PC-9 (cell line): ENCODE measurements at regions of chr11 and their contacts with region 1.

Region 1: GRCh38 chr11:27718346-27718852 is 18.1 kb upstream of the BDNF start:
- DNase-seq: peak in 1 of 2 experiments; percentile 55
- H3K4me3 ChIP-seq: peak overlapping the region; percentile 58
- H3K27ac ChIP-seq: peak overlapping the region; percentile 68
- H3K4me1 ChIP-seq: 0 out of 2 replicates have a peak, but pooled peaks cover 7% of the 10 kb centered on the region
- H3K27me3 ChIP-seq: no peaks in the 10 kb centered on the region
- CTCF ChIP-seq: no peak

Region 2: DNA sequence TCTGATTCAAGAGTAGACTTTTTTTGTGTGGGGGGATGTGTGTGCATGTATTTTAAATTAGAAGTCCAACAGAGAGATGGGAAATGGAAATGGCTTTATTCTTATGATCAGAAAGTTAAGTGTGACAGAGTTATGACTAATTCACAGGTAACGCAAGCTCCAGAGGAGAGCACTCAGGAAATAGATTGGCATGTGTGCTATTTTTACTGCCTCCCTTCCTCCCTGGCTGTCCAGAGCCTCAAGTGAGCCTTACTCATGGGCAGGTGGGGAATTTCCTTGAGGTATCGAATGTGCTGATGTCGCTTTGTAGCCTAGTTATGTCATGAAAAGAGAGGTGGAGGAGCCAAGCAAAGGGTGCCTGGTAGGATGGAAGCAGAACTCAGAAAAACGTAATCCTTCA is 52.2 kb after region 1 on chr11:
- CTCF ChIA-PET with region 1: no interaction called
- POLR2A ChIA-PET with region 1: no interaction called
- intact Hi-C with region 1: loop called (anchors 5 kb)
- DNase-seq: peak; percentile 30 to 79
- H3K4me3 ChIP-seq: no peak overlapping the region
- H3K27ac ChIP-seq: no peak overlapping the region
- H3K4me1 ChIP-seq: peaks cover 12% of the 10 kb centered on the region
- H3K27me3 ChIP-seq: no peaks in the 10 kb centered on the region
- CTCF ChIP-seq: no peak

Region 3: DNA sequence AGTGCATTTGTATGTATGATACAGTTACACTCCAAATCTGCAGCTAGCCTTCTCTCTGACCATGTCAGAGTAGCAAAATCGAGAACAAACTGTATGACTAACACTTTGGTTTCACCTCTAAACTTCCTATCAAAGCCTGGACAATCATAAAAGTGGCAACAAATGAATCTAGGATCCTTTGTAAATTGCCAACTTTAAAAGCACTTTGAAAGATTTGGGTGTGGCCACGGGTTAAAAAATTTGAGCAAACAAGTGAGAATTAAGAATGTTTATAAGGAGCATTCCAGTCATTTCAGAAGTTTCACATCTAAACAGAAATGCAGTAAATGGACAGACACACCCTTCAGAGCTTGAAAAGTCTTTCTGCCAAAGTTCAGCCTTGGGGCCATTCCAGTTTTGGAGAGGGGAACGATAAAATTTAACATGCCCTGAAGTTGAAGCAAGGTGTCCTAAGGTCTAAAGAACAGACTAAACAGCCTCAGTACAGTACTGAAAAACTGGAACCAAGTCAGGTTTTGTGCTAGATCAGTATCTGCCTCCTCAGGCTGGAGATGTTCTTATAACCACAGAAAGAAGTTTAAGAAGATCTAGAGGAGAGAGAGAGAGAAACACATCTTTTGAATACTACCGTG is 163.8 kb after region 1 on chr11:
- CTCF ChIA-PET with region 1: interaction called, 17 read pairs
- POLR2A ChIA-PET with region 1: no interaction called
- intact Hi-C with region 1: no loop called
- DNase-seq: peak; percentile 11 to 85
- H3K4me3 ChIP-seq: no peak overlapping the region
- H3K27ac ChIP-seq: peak overlapping the region; percentile 67
- H3K4me1 ChIP-seq: peaks cover 32% of the 10 kb centered on the region
- H3K27me3 ChIP-seq: no peaks in the 10 kb centered on the region
- CTCF ChIP-seq: no peak